ENCODE measurements at regions of chr14 and their contacts with region 1.

Region 1: GRCh38 chr14:67619446-67620216 is at the start of gene ARG2:
- DNase-seq: peak; percentile 65
- ATAC-seq: peak; percentile 97
- H3K4me3 ChIP-seq: peak within 1 kb of the TSS; percentile 82
- H3K27ac ChIP-seq: no peak within 1 kb of the TSS
- H3K4me1 ChIP-seq: peaks cover 5% of the 10 kb centered on the region; the same call in 1 of the 2 replicates
- H3K27me3 ChIP-seq: no peaks in the 10 kb centered on the region
- CTCF ChIP-seq: peak in 1 of 3 experiments; percentile 32; a peak in 1 of 6 replicates
- EP300 ChIP-seq: no peak
- POLR2A ChIP-seq: peak; percentile 56
- RAD21 ChIP-seq: no peak
- polyA plus RNA-seq, gene ARG2: 2.1 to 3.2 TPM

Region 2: GRCh38 chr14:67599698-67600561 is 19.7 kb before region 1 on chr14 and contains the start of gene PIGH:
- CTCF ChIA-PET with region 1: interaction called, 35 read pairs
- POLR2A ChIA-PET with region 1: interaction called, 9 read pairs
- RAD21 ChIA-PET with region 1: interaction called, 12 read pairs
- SMC1A ChIA-PET with region 1: interaction called, 23 read pairs
- in situ Hi-C with region 1: no loop called
- intact Hi-C with region 1: no loop called
- DNase-seq: peak; percentile 56
- ATAC-seq: peak; percentile 96
- H3K4me3 ChIP-seq: peak within 1 kb of the TSS; percentile 85
- H3K27ac ChIP-seq: peak within 1 kb of the TSS; percentile 70
- H3K4me1 ChIP-seq: peaks cover 9% of the 10 kb centered on the region; the same call in 1 of the 2 replicates
- H3K27me3 ChIP-seq: no peaks in the 10 kb centered on the region
- CTCF ChIP-seq: peak; percentile 49 to 61 (median 50); a peak in 5 of 6 replicates
- EP300 ChIP-seq: no peak
- POLR2A ChIP-seq: peak; percentile 85
- RAD21 ChIP-seq: no peak
- polyA plus RNA-seq, gene PIGH: 15.5 to 17.8 TPM

Region 3: DNA sequence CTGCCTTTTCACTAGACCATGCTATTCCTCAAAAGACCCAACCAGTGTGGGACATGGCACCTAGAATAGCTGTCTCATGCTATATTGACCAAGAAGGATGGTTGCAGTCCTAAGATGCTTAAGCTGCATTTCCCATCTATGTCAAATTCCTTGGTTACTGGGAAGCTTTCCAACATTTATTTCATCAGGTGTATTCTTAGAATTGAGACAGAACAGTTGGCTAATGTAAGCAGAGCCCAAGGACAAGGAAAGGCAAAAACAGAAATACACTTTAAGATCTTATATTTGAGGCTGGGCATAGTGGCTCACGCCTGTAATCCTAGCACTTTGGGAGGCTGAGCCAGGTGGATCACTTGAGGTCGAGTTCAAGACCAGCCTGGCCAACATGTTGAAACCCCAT is 24.8 kb after region 1 on chr14:
- CTCF ChIA-PET with region 1: interaction called, 8 read pairs
- POLR2A ChIA-PET with region 1: no interaction called
- RAD21 ChIA-PET with region 1: interaction called, 19 read pairs
- SMC1A ChIA-PET with region 1: interaction called, 4 read pairs
- in situ Hi-C with region 1: no loop called
- intact Hi-C with region 1: no loop called
- DNase-seq: no peak
- ATAC-seq: no peak
- H3K4me3 ChIP-seq: no peak overlapping the region
- H3K27ac ChIP-seq: no peak overlapping the region
- H3K4me1 ChIP-seq: no peaks in the 10 kb centered on the region
- H3K27me3 ChIP-seq: no peaks in the 10 kb centered on the region
- CTCF ChIP-seq: no peak
- EP300 ChIP-seq: no peak
- POLR2A ChIP-seq: no peak
- RAD21 ChIP-seq: no peak

Region 4: DNA sequence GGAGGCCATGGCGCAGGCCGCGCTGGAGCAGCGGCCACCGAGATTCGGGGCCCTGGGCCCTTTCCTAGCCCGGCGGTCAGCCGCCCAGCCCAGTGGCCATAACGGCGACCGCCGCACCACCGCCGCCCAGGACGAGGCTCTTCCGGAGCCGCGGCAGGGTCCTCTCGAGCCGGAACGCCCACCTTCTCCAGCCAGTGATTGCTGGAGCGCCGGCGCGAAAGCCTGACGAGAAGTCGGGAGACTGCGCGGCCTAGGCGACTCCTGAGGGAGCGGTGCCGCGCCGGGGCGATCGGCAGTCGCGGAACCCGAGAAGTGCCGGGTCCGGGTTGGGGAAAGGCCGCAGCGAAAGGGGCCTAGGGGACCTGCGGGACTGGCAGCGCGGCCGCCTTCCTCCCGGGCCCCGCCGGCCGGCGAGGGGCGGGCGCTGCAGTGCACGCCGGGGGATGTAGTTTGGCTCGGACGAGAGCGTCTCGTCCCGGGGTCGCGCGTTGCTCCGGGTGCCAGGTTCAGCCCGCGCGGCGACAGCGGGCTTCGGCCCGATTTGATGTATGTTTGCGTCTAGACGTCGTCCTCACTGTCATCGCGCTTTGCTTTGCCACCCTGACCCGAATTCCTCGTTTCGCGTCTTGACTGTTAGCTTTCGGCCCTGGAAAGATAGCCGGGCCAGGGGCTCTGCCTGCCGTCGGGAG is 55.0 kb after region 1 on chr14 and contains the start of gene VTI1B:
- CTCF ChIA-PET with region 1: interaction called, 152 read pairs
- POLR2A ChIA-PET with region 1: no interaction called
- RAD21 ChIA-PET with region 1: interaction called, 35 read pairs
- SMC1A ChIA-PET with region 1: interaction called, 5 read pairs
- in situ Hi-C with region 1: no loop called
- intact Hi-C with region 1: no loop called
- DNase-seq: no peak
- ATAC-seq: peak; percentile 97
- H3K4me3 ChIP-seq: peak within 1 kb of the TSS; percentile 85
- H3K27ac ChIP-seq: peak within 1 kb of the TSS; percentile 97
- H3K4me1 ChIP-seq: peaks cover 9% of the 10 kb centered on the region
- H3K27me3 ChIP-seq: no peaks in the 10 kb centered on the region
- CTCF ChIP-seq: 0 out of 6 replicates have a peak, but pooled peaks of 1 of the 3 experiments have one; percentile 0
- EP300 ChIP-seq: no peak
- POLR2A ChIP-seq: peak; percentile 94
- RAD21 ChIP-seq: no peak
- polyA plus RNA-seq, gene VTI1B: 15.0 to 43.8 TPM

Region 5: GRCh38 chr14:67695394-67695949 is 75.8 kb after region 1 on chr14 and contains the start of gene RDH11:
- CTCF ChIA-PET with region 1: interaction called, 179 read pairs
- POLR2A ChIA-PET with region 1: interaction called, 4 read pairs
- RAD21 ChIA-PET with region 1: interaction called, 99 read pairs
- SMC1A ChIA-PET with region 1: interaction called, 9 read pairs
- in situ Hi-C with region 1: loop called (anchors 5 kb)
- intact Hi-C with region 1: no loop called
- DNase-seq: peak; percentile 50
- ATAC-seq: peak; percentile 96
- H3K4me3 ChIP-seq: peak within 1 kb of the TSS; percentile 97
- H3K27ac ChIP-seq: peak within 1 kb of the TSS; percentile 88
- H3K4me1 ChIP-seq: no peaks in the 10 kb centered on the region
- H3K27me3 ChIP-seq: no peaks in the 10 kb centered on the region
- CTCF ChIP-seq: no peak
- EP300 ChIP-seq: no peak
- POLR2A ChIP-seq: peak; percentile 91
- RAD21 ChIP-seq: no peak
- polyA plus RNA-seq, gene RDH11: 76.2 to 88.7 TPM

Measured in GM12878 (cell line).